H1 (cell line): ENCODE measurements at regions of chr14 and their contacts with region 1.

Region 1: GRCh38 chr14:64196814-64197411 is 97.3 kb downstream of the ESR2 start:
- DNase-seq: peak in 1 of 2 experiments; percentile 78
- H3K4me3 ChIP-seq: peak overlapping the region; percentile 26 to 59 (median 53); a peak in 7 of 8 replicates
- H3K27ac ChIP-seq: no peak overlapping the region; the same call in 1 of the 2 replicates
- H3K4me1 ChIP-seq: peaks cover 15 to 27% (median 20%) of the 10 kb centered on the region in 4 experiments
- H3K27me3 ChIP-seq: no peaks in the 10 kb centered on the region
- CTCF ChIP-seq: no peak
- EP300 ChIP-seq: no peak
- POLR2A ChIP-seq: no peak
- RAD21 ChIP-seq: no peak

Region 2: DNA sequence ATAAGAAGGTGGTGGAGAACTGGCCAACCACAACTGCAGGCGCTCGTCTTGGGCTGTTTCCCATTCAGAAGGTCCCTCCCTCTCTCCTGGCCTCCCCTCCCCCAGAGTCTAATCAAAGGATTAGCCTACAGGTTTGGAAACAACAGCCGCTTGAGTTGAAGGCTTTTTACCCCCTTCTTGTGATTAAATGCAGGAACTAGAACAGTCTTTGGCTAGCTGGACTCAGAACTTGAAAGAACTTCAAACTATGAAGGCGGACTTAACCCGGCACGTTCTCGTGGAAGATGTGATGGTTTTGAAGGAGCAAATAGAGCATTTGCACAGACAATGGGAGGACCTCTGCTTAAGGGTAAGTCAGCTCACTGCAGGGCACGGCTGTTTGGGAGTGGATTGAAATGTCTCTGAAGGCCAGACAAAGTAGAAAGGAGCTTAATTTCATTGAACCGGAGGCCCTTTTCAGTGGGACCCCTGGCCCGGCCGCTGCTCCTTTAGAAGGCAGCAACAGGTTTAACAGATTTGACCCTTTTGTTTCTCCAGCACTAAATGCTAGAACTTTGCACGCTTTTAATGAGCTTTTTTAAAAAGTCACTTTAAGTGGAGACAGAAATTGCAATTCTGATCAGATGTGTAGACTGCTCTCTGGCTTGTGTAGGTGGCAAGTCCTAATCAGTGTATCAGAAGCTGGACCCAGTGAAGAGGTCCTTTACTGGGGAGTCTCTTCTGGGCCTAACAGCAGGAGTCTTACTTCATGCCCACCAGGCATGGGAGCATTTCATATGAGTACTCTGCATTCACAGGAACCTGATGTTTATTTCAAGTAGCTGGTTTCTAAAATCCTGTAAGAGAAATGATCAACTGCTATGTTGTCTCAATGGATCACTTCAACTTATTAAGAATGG is 10.4 kb before region 1 on chr14:
- CTCF ChIA-PET with region 1: interaction called, 4 read pairs
- POLR2A ChIA-PET with region 1: interaction called, 13 read pairs
- DNase-seq: peak in 1 of 2 experiments; percentile 60
- H3K4me3 ChIP-seq: peak overlapping the region; percentile 16 to 80 (median 45)
- H3K27ac ChIP-seq: peak overlapping the region; percentile 33; the same call in 1 of the 2 replicates
- H3K4me1 ChIP-seq: peaks cover 0 to 13% (median 7%) of the 10 kb centered on the region in 4 experiments; a peak in 3 of 7 replicates
- H3K27me3 ChIP-seq: no peaks in the 10 kb centered on the region
- CTCF ChIP-seq: no peak
- EP300 ChIP-seq: no peak
- POLR2A ChIP-seq: no peak
- RAD21 ChIP-seq: no peak

Region 3: GRCh38 chr14:64209444-64210131 is 12.7 kb after region 1 on chr14:
- CTCF ChIA-PET with region 1: interaction called, 14 read pairs
- POLR2A ChIA-PET with region 1: no interaction called
- DNase-seq: no peak
- H3K4me3 ChIP-seq: no peak overlapping the region
- H3K27ac ChIP-seq: no peak overlapping the region
- H3K4me1 ChIP-seq: no peaks in the 10 kb centered on the region
- H3K27me3 ChIP-seq: no peaks in the 10 kb centered on the region
- CTCF ChIP-seq: no peak
- EP300 ChIP-seq: no peak
- POLR2A ChIP-seq: no peak
- RAD21 ChIP-seq: no peak

Region 4: GRCh38 chr14:64225151-64225757 is 28.3 kb after region 1 on chr14:
- CTCF ChIA-PET with region 1: no interaction called
- POLR2A ChIA-PET with region 1: no interaction called
- DNase-seq: no peak
- H3K4me3 ChIP-seq: no peak overlapping the region
- H3K27ac ChIP-seq: no peak overlapping the region
- H3K4me1 ChIP-seq: no peaks in the 10 kb centered on the region
- H3K27me3 ChIP-seq: no peaks in the 10 kb centered on the region
- CTCF ChIP-seq: no peak
- EP300 ChIP-seq: no peak
- POLR2A ChIP-seq: no peak
- RAD21 ChIP-seq: no peak

Region 5: GRCh38 chr14:64324895-64325294 is 128.0 kb after region 1 on chr14:
- CTCF ChIA-PET with region 1: no interaction called
- POLR2A ChIA-PET with region 1: no interaction called
- DNase-seq: no peak
- H3K4me3 ChIP-seq: no peak overlapping the region
- H3K27ac ChIP-seq: no peak overlapping the region
- H3K4me1 ChIP-seq: no peaks in the 10 kb centered on the region; a peak in 1 of 7 replicates
- H3K27me3 ChIP-seq: no peaks in the 10 kb centered on the region
- CTCF ChIP-seq: no peak
- EP300 ChIP-seq: no peak
- POLR2A ChIP-seq: no peak
- RAD21 ChIP-seq: no peak